Panc1 (cell line): ENCODE measurements at regions of chr4 and their contacts with region 1.

Region 1: GRCh38 chr4:182478475-182478874 is 235.3 kb downstream of the TENM3 start:
- DNase-seq: no peak
- ATAC-seq: peak; percentile 56; the same call in 1 of the 2 replicates
- H3K4me3 ChIP-seq: no peak overlapping the region
- H3K27ac ChIP-seq: no peak overlapping the region
- H3K4me1 ChIP-seq: no peaks in the 10 kb centered on the region
- H3K27me3 ChIP-seq: no peaks in the 10 kb centered on the region
- CTCF ChIP-seq: peak; percentile 65; the same call in 1 of the 2 replicates

Region 2: DNA sequence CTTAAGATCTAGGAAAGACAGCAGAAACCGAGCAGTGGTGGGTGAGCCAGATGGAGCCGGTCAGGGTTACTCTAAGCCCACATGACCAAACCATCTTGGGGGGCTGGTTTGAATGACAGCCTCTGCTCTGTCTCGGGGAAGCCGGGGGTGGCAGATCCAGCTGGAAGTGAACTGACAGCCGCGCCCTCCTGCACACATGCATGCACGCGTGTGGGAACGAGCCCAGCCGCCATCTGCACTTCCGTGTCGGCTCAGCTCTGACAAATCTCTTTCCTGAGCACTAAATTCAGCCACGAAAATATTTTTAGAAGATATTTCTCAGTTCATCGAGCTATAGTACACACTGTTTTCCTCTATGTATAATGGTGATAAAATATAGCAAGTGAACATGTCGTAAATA is 323.2 kb after region 1 on chr4:
- CTCF ChIA-PET with region 1: no interaction called
- POLR2A ChIA-PET with region 1: no interaction called
- in situ Hi-C with region 1: no loop called
- intact Hi-C with region 1: loop called (anchors 5 kb)
- DNase-seq: no peak
- ATAC-seq: no peak
- H3K4me3 ChIP-seq: no peak overlapping the region
- H3K27ac ChIP-seq: no peak overlapping the region
- H3K4me1 ChIP-seq: no peaks in the 10 kb centered on the region
- H3K27me3 ChIP-seq: no peaks in the 10 kb centered on the region
- CTCF ChIP-seq: no peak

Region 3: DNA sequence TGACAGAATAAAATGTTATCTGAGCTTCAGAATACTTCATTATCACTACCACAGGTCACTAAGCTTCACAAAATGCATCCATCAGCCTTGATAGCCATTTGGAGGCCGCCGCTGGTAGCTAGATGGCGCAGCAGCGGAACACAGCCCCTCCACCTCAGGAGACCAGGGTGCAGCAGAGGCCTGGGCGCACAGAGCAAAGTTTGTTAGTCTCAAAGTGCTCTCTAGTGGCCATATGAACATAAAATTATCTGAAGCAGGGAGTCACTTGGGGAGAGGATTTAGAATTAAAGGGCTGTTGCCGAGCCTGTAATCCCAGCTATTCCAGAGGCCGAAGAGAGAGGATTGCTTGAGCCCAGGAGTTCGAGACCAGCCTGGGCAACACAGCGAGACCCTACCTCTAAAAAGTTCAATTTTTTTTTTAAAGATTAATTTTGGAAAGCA is 446.8 kb after region 1 on chr4:
- CTCF ChIA-PET with region 1: no interaction called
- POLR2A ChIA-PET with region 1: no interaction called
- in situ Hi-C with region 1: no loop called
- intact Hi-C with region 1: loop called (anchors 10 kb)
- DNase-seq: peak; percentile 54
- ATAC-seq: peak; percentile 97
- H3K4me3 ChIP-seq: no peak overlapping the region
- H3K27ac ChIP-seq: no peak overlapping the region
- H3K4me1 ChIP-seq: no peaks in the 10 kb centered on the region
- H3K27me3 ChIP-seq: no peaks in the 10 kb centered on the region
- CTCF ChIP-seq: peak; percentile 88